Astrocyte of the cerebellum (primary cell): ENCODE measurements at regions of chr14 and their contacts with region 1.

Region 1: GRCh38 chr14:103696466-103697071 is 18.7 kb downstream of the XRCC3 start:
- DNase-seq: peak; percentile 11
- H3K4me3 ChIP-seq: no peak overlapping the region
- CTCF ChIP-seq: no peak

Region 2: DNA sequence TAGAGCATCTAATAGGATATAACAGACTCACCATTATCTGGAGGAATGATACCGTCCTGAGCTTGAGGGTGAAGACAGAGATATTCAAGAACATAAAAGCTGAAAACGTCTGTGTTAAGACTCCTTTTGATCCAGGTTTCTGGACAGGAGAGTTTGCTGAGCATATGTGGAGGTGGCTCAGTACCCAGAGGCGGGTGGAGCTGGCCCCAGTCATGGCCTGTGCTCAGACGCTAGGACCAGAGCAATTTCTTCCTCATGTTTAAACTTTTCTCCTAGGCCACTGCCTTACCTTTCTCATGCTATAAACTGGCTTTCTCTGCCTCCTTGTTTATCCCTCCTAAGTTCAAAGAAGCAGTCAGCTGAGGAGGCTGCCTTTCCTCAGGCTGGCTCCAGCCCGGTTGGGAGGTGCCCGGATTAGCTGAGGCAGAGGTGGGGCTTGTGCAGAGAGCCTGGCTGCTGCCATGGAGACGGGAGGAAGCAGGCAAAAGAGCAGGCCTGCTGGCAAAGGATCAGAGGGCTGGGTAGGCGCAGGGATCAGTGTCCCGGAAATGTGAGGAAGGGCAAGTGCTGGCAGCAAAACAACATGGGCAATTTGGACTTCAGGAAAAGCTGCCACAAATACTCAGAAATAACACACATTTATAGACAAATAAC is 120.1 kb before region 1 on chr14:
- in situ Hi-C with region 1: loop called (anchors 10 kb)
- DNase-seq: peak; percentile 45
- H3K4me3 ChIP-seq: no peak overlapping the region
- CTCF ChIP-seq: no peak

Region 3: GRCh38 chr14:103740991-103741689 is 44.6 kb after region 1 on chr14:
- in situ Hi-C with region 1: no loop called
- DNase-seq: no peak
- H3K4me3 ChIP-seq: no peak overlapping the region
- CTCF ChIP-seq: no peak